Breast epithelium (tissue), 4 donors: ENCODE measurements at regions of chr15 and their contacts with region 1.

Region 1: DNA sequence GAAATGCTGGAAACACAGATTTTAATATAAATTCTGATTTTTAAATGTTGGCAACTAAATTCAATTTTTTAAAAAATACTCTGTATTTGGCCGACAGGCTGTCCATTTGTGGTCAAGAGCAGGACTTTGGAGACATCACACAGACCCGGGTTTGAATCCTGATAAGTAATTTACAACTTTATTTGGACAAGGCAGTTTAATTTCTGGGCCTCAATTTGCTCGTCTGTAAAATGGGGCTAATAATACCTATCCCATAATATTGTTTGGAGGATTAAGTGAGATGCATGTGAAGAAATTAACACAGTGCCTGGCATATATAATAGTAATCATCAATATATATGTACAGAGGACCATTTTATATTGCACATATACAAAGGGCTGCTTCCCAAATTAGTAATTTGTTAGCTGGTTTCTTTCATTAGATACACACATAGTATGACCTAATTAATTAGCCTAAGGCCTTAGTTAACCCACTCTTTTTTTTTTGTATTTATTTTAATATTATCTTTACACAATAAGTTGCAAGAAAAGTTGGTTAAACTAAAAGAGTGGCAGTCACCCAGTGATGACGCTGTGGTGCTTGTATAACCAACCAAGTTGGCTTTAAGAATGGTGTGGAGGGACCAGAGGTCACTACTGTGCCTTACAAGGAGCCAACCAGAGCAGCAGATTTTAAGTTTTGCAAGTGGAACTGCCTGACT is 665 bp downstream of the PIGB start:
- DNase-seq: no peak
- H3K4me3 ChIP-seq: peak overlapping the region; percentile 69 to 89 (median 79)
- H3K27ac ChIP-seq: peak overlapping the region in 1 of 2 donors; percentile 92
- H3K4me1 ChIP-seq: no peaks in the 10 kb centered on the region
- H3K27me3 ChIP-seq: no peaks in the 10 kb centered on the region
- CTCF ChIP-seq: no peak
- POLR2A ChIP-seq: no peak

Region 2: GRCh38 chr15:57259568-57260040 is 1939.9 kb after region 1 on chr15:
- intact Hi-C with region 1: loop called (anchors 10 kb)
- DNase-seq: no peak
- H3K4me3 ChIP-seq: no peak overlapping the region
- H3K27ac ChIP-seq: no peak overlapping the region
- H3K4me1 ChIP-seq: no peaks in the 10 kb centered on the region
- H3K27me3 ChIP-seq: no peaks in the 10 kb centered on the region
- CTCF ChIP-seq: no peak
- POLR2A ChIP-seq: no peak